ENCODE measurements at regions of chr20 and their contacts with region 1.

Region 1: DNA sequence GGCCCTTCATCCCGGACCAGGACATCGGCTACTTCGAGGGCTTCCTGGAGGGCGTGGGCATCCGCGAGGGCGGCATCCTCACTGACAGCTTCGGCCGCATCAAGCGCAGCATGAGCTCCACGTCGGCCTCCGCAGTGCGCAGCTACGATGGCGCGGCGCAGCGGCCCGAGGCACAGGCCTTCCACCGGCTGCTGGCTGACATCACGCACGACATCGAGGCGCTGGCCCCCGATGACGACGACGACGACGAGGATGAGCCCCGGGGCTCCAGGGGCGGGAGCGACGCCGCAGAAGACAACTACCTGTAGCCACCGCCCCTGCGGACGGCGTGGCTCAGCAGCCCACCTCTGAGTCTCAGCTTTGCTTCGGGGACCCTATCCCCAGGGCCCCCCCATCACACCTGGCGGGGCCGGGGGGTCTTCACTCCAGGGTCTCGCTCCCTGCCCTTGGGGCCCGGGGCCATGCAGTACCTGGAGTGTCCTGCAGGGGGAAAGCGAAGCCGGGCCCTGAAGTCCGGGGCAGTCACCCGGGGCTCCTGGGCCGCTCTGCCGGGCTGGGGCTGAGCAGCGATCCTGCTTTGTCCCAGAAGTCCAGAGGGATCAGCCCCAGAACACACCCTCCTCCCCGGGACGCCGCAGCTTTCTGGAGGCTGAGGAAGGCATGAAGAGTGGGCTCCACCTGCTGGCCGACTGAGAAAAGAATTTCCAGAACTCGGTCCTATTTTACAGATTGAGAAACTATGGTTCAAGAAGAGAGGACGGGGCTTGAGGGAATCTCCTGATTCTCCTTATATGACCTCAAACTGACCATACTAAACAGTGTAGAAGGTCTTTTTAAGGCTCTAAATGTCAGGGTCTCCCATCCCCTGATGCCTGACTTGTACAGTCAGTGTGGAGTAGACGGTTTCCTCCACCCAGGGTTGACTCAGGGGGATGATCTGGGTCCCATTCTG is 20.8 kb upstream of the HCK start:
- DNase-seq: peak; percentile 58 to 73 (median 72)
- H3K4me3 ChIP-seq: peak overlapping the region; percentile 1 to 74 (median 19)
- H3K4me3 Mint-ChIP-seq: peak overlapping the region; percentile 69 to 70
- H3K27ac ChIP-seq: peak overlapping the region in 1 of 2 donors; percentile 48
- H3K27ac Mint-ChIP-seq: peak overlapping the region in 6 of 7 donors; percentile 49 to 81 (median 71)
- H3K4me1 ChIP-seq: peaks cover 52 to 57% of the 10 kb centered on the region in 2 donors
- H3K4me1 Mint-ChIP-seq: peaks cover 52% of the 10 kb centered on the region
- H3K27me3 ChIP-seq: no peaks in the 10 kb centered on the region
- H3K27me3 Mint-ChIP-seq: peaks cover 2 to 11% (median 7%) of the 10 kb centered on the region in 3 donors
- CTCF ChIP-seq: peak; percentile 100

Region 2: GRCh38 chr20:31822421-31823330 is 208.6 kb before region 1 on chr20:
- intact Hi-C with region 1: loop called in 1 of 2 experiments (anchors 10 kb)
- DNase-seq: peak; percentile 54 to 68 (median 60)
- H3K4me3 ChIP-seq: no peak overlapping the region
- H3K4me3 Mint-ChIP-seq: peak overlapping the region; percentile 24 to 74
- H3K27ac ChIP-seq: no peak overlapping the region
- H3K27ac Mint-ChIP-seq: no peak overlapping the region
- H3K4me1 ChIP-seq: peaks cover 3 to 9% of the 10 kb centered on the region in 2 donors
- H3K4me1 Mint-ChIP-seq: peaks cover 4% of the 10 kb centered on the region
- H3K27me3 ChIP-seq: peaks cover 0 to 6% of the 10 kb centered on the region in 2 donors
- H3K27me3 Mint-ChIP-seq: peaks cover 2 to 8% (median 3%) of the 10 kb centered on the region in 3 donors
- CTCF ChIP-seq: peak; percentile 98

Region 3: DNA sequence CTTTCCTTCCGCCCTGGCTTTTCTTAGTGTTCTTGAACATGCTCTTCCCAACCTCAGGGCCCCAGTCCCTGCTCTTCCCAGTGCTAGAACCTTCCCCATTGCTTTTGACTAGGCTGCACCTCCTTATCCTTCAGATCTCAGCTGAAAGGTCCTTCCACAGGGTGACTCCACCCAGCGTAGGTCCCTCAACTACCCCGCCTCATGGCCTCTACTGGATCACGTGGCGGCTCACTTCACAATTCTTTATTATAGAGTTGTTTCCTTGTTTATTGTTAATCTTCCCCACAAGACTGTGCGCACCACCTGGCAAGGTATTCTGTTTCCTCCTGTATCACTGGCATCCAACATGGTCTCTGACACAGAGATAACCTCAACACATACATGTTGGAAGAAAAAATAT is 129.7 kb before region 1 on chr20:
- intact Hi-C with region 1: no loop called
- DNase-seq: no peak
- H3K4me3 ChIP-seq: no peak overlapping the region
- H3K4me3 Mint-ChIP-seq: no peak overlapping the region
- H3K27ac ChIP-seq: no peak overlapping the region
- H3K27ac Mint-ChIP-seq: no peak overlapping the region
- H3K4me1 ChIP-seq: no peaks in the 10 kb centered on the region
- H3K4me1 Mint-ChIP-seq: peaks cover 3% of the 10 kb centered on the region
- H3K27me3 ChIP-seq: no peaks in the 10 kb centered on the region
- H3K27me3 Mint-ChIP-seq: peaks cover 1 to 2% (median 1%) of the 10 kb centered on the region in 3 donors
- CTCF ChIP-seq: no peak

Region 4: GRCh38 chr20:32062776-32063170 is 31.5 kb after region 1 on chr20:
- intact Hi-C with region 1: loop called in 1 of 2 experiments (anchors 5 kb)
- DNase-seq: peak; percentile 95 to 97 (median 97)
- H3K4me3 ChIP-seq: peak overlapping the region; percentile 33 to 72 (median 34)
- H3K4me3 Mint-ChIP-seq: peak overlapping the region; percentile 76 to 94
- H3K27ac ChIP-seq: peak overlapping the region; percentile 91 to 94
- H3K27ac Mint-ChIP-seq: peak overlapping the region; percentile 97 to 100 (median 99)
- H3K4me1 ChIP-seq: peaks cover 98 to 100% of the 10 kb centered on the region in 2 donors
- H3K4me1 Mint-ChIP-seq: peaks cover 96% of the 10 kb centered on the region
- H3K27me3 ChIP-seq: no peaks in the 10 kb centered on the region
- H3K27me3 Mint-ChIP-seq: no peaks in the 10 kb centered on the region
- CTCF ChIP-seq: no peak

Region 5: DNA sequence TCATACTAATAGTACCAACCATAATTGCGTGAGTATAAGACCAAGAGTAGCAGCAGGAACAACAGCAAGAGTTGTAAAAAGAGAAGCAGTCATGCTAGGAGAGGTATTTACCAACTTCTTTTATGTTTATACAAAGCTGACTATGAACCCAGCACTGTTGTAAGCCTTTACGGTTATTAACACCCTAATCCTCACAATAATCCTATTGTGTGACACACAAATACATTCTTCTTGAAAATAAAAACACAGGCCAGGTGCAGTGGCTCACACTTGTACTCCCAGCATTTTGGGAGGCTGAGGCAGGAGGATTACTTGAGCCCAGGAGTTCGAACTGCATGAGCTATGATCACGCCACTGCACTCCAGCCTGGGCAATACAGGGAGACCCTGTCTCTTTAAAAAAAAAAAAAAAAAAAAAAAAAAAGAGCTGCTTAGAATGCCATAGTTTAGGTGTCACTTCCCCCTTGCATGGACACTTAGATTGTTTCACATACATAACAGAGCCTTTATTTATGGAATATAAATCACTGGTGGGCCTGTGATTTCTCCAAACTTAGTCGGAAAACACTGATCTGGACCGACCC is 41.0 kb after region 1 on chr20:
- intact Hi-C with region 1: loop called (anchors 5 kb)
- DNase-seq: no peak
- H3K4me3 ChIP-seq: no peak overlapping the region
- H3K4me3 Mint-ChIP-seq: no peak overlapping the region
- H3K27ac ChIP-seq: peak overlapping the region in 1 of 2 donors; percentile 97
- H3K27ac Mint-ChIP-seq: peak overlapping the region in 6 of 7 donors; percentile 30 to 100 (median 75)
- H3K4me1 ChIP-seq: peaks cover 65 to 78% of the 10 kb centered on the region in 2 donors
- H3K4me1 Mint-ChIP-seq: peaks cover 52% of the 10 kb centered on the region
- H3K27me3 ChIP-seq: no peaks in the 10 kb centered on the region
- H3K27me3 Mint-ChIP-seq: peaks cover 0 to 4% (median 2%) of the 10 kb centered on the region in 3 donors
- CTCF ChIP-seq: no peak

Region 6: DNA sequence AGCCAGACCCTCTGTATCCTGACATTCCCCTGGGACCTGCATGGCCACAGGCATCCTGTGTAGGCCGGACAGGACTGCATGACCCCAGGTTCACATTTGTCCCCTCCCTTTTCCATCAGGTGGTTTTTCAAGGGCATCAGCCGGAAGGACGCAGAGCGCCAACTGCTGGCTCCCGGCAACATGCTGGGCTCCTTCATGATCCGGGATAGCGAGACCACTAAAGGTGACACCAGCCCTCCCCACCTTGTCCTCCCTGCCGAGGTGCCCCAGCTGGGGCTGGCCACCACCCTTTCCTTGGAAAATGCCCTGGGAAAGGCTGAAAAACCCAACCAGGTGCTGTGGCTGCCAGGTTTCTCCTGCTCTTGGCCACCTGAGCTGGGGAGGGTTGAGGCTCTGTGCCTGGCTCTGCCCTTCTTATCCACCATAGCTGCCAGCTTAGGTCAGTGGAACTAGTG is 48.4 kb after region 1 on chr20:
- intact Hi-C with region 1: loop called in 1 of 2 experiments (anchors 5 kb)
- DNase-seq: no peak
- H3K4me3 ChIP-seq: no peak overlapping the region
- H3K4me3 Mint-ChIP-seq: no peak overlapping the region
- H3K27ac ChIP-seq: peak overlapping the region; percentile 33 to 72
- H3K27ac Mint-ChIP-seq: peak overlapping the region in 6 of 7 donors; percentile 0 to 90 (median 74)
- H3K4me1 ChIP-seq: peaks cover 48 to 62% of the 10 kb centered on the region in 2 donors
- H3K4me1 Mint-ChIP-seq: peaks cover 56% of the 10 kb centered on the region
- H3K27me3 ChIP-seq: no peaks in the 10 kb centered on the region
- H3K27me3 Mint-ChIP-seq: peaks cover 0 to 2% (median 0%) of the 10 kb centered on the region in 3 donors
- CTCF ChIP-seq: no peak

Region 7: GRCh38 chr20:32091888-32092346 is 60.6 kb after region 1 on chr20:
- intact Hi-C with region 1: loop called in 1 of 2 experiments (anchors 5 kb)
- DNase-seq: peak; percentile 63 to 77 (median 76)
- H3K4me3 ChIP-seq: no peak overlapping the region
- H3K4me3 Mint-ChIP-seq: no peak overlapping the region
- H3K27ac ChIP-seq: peak overlapping the region in 1 of 2 donors; percentile 64
- H3K27ac Mint-ChIP-seq: peak overlapping the region in 5 of 7 donors; percentile 60 to 84 (median 65)
- H3K4me1 ChIP-seq: peaks cover 0 to 11% of the 10 kb centered on the region in 2 donors
- H3K4me1 Mint-ChIP-seq: peaks cover 15% of the 10 kb centered on the region
- H3K27me3 ChIP-seq: no peaks in the 10 kb centered on the region
- H3K27me3 Mint-ChIP-seq: peaks cover 0 to 1% (median under 1%) of the 10 kb centered on the region in 3 donors
- CTCF ChIP-seq: peak; percentile 97

Measured in CD14-positive monocyte (primary cell).